ENCODE measurements at regions of chr13 and their contacts with region 1.

Region 1: DNA sequence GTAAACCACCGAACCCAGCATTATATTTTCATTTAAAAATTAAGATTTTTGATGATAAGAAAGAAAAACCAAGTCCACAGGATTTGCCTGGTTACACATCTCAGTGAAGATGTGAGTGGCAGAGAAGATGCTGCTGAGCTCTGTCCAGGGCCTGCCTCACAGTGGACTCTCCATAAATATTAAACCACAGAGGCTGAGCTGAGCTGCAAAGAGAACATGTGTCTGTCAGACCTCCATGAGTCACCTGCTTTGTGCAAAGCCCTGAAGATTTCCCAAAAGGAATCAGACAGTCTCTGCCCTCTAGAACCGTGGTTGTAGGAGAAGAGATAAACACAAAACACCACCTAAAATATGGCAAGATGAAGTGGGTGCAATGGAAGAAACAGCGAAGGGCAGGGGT is 127.2 kb upstream of the TSC22D1 start:
- DNase-seq: no peak
- H3K4me3 ChIP-seq: no peak overlapping the region
- H3K27ac ChIP-seq: no peak overlapping the region
- H3K4me1 ChIP-seq: no peaks in the 10 kb centered on the region
- H3K27me3 ChIP-seq: no peaks in the 10 kb centered on the region
- CTCF ChIP-seq: no peak
- POLR2A ChIP-seq: no peak

Region 2: GRCh38 chr13:46041419-46041839 is 1338.1 kb after region 1 on chr13:
- intact Hi-C with region 1: loop called (anchors 10 kb)
- DNase-seq: no peak
- H3K4me3 ChIP-seq: no peak overlapping the region
- H3K27ac ChIP-seq: no peak overlapping the region
- H3K4me1 ChIP-seq: no peaks in the 10 kb centered on the region
- H3K27me3 ChIP-seq: no peaks in the 10 kb centered on the region
- CTCF ChIP-seq: no peak
- POLR2A ChIP-seq: no peak

Measured in breast epithelium (tissue), 4 donors.